GM12878 (cell line): ENCODE measurements at regions of chr12 and their contacts with region 1.

Region 1: GRCh38 chr12:100554608-100555077 is 18.8 kb upstream of the GAS2L3 start:
- DNase-seq: no peak
- ATAC-seq: peak; percentile 34; the same call in 2 of the 3 replicates
- H3K4me3 ChIP-seq: no peak overlapping the region
- H3K27ac ChIP-seq: no peak overlapping the region
- H3K4me1 ChIP-seq: no peaks in the 10 kb centered on the region
- H3K27me3 ChIP-seq: no peaks in the 10 kb centered on the region
- CTCF ChIP-seq: peak; percentile 44 to 59 (median 50); a peak in 5 of 6 replicates
- EP300 ChIP-seq: no peak
- POLR2A ChIP-seq: no peak
- RAD21 ChIP-seq: peak; percentile 63

Region 2: GRCh38 chr12:99810718-99811593 is 743.7 kb before region 1 on chr12:
- CTCF ChIA-PET with region 1: no interaction called
- POLR2A ChIA-PET with region 1: no interaction called
- RAD21 ChIA-PET with region 1: no interaction called
- SMC1A ChIA-PET with region 1: no interaction called
- in situ Hi-C with region 1: no loop called
- intact Hi-C with region 1: loop called (anchors 10 kb)
- DNase-seq: no peak
- ATAC-seq: peak; percentile 21; the same call in 1 of the 3 replicates
- H3K4me3 ChIP-seq: no peak overlapping the region
- H3K27ac ChIP-seq: no peak overlapping the region
- H3K4me1 ChIP-seq: no peaks in the 10 kb centered on the region
- H3K27me3 ChIP-seq: no peaks in the 10 kb centered on the region; a peak in 1 of 4 replicates
- CTCF ChIP-seq: peak; percentile 3 to 28 (median 14); a peak in 2 of 6 replicates
- EP300 ChIP-seq: no peak
- POLR2A ChIP-seq: no peak
- RAD21 ChIP-seq: peak; percentile 23

Region 3: GRCh38 chr12:100154474-100155247 is 400.0 kb before region 1 on chr12:
- CTCF ChIA-PET with region 1: interaction called, 5 read pairs
- POLR2A ChIA-PET with region 1: no interaction called
- RAD21 ChIA-PET with region 1: no interaction called
- SMC1A ChIA-PET with region 1: no interaction called
- in situ Hi-C with region 1: no loop called
- intact Hi-C with region 1: loop called (anchors 10 kb)
- DNase-seq: no peak
- ATAC-seq: peak; percentile 91
- H3K4me3 ChIP-seq: no peak overlapping the region
- H3K27ac ChIP-seq: no peak overlapping the region
- H3K4me1 ChIP-seq: 0 out of 2 replicates have a peak, but pooled peaks cover 3% of the 10 kb centered on the region
- H3K27me3 ChIP-seq: no peaks in the 10 kb centered on the region
- CTCF ChIP-seq: peak; percentile 63 to 94 (median 91)
- EP300 ChIP-seq: no peak
- POLR2A ChIP-seq: no peak
- RAD21 ChIP-seq: peak; percentile 56

Region 4: DNA sequence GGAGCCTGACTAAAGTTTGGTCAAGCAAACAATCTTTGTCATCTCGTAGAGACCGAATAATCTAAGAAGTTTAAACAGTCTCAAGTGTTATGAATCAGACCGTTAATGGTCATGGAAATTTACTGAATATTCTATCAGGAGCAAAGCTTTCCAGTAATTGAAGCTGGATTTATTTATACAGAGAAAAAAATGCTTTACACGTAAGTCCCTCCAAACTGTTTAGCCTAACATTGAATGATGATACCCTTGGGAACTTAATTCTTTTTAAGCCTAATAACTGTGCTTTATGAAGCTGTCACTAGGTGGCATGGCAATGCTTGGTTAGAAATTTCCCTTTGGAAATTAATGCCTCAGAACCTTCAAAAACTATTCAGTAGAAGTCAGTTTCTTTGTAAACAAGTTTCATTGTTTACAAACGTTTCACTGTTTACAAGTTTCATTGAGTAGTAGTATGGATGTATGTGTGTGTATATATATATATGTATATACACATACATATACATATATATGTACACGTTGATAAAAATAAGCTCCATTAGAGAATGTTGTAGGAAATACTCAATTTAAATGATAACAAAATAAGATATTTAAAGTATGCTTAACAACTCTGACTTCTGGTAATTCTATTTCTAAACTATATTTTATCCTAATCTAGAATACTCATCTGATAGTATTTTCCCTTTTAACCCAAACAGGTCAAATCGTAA is 319.9 kb before region 1 on chr12:
- CTCF ChIA-PET with region 1: interaction called, 33 read pairs
- POLR2A ChIA-PET with region 1: interaction called, 6 read pairs
- RAD21 ChIA-PET with region 1: interaction called, 15 read pairs
- SMC1A ChIA-PET with region 1: interaction called, 7 read pairs
- in situ Hi-C with region 1: loop called (anchors 5 kb)
- intact Hi-C with region 1: loop called (anchors 2 kb)
- DNase-seq: peak; percentile 1
- ATAC-seq: peak; percentile 70
- H3K4me3 ChIP-seq: no peak overlapping the region
- H3K27ac ChIP-seq: no peak overlapping the region
- H3K4me1 ChIP-seq: no peaks in the 10 kb centered on the region
- H3K27me3 ChIP-seq: no peaks in the 10 kb centered on the region
- CTCF ChIP-seq: peak; percentile 71 to 84 (median 75)
- EP300 ChIP-seq: no peak
- POLR2A ChIP-seq: no peak
- RAD21 ChIP-seq: peak; percentile 88

Region 5: GRCh38 chr12:100348657-100349454 is 205.8 kb before region 1 on chr12:
- CTCF ChIA-PET with region 1: interaction called, 13 read pairs
- POLR2A ChIA-PET with region 1: no interaction called
- RAD21 ChIA-PET with region 1: interaction called, 3 read pairs
- SMC1A ChIA-PET with region 1: interaction called, 4 read pairs
- in situ Hi-C with region 1: no loop called
- intact Hi-C with region 1: loop called (anchors 5 kb)
- DNase-seq: no peak
- ATAC-seq: peak; percentile 58; the same call in 2 of the 3 replicates
- H3K4me3 ChIP-seq: no peak overlapping the region
- H3K27ac ChIP-seq: no peak overlapping the region
- H3K4me1 ChIP-seq: no peaks in the 10 kb centered on the region
- H3K27me3 ChIP-seq: no peaks in the 10 kb centered on the region
- CTCF ChIP-seq: peak in 2 of 3 experiments; percentile 8 to 48; a peak in 2 of 6 replicates
- EP300 ChIP-seq: no peak
- POLR2A ChIP-seq: no peak
- RAD21 ChIP-seq: peak; percentile 59

Region 6: GRCh38 chr12:100566887-100567637 is 12.4 kb after region 1 on chr12:
- CTCF ChIA-PET with region 1: interaction called, 28 read pairs
- POLR2A ChIA-PET with region 1: interaction called, 3 read pairs
- RAD21 ChIA-PET with region 1: interaction called, 9 read pairs
- SMC1A ChIA-PET with region 1: interaction called, 7 read pairs
- in situ Hi-C with region 1: no loop called
- intact Hi-C with region 1: no loop called
- DNase-seq: peak; percentile 71
- ATAC-seq: peak; percentile 97
- H3K4me3 ChIP-seq: no peak overlapping the region
- H3K27ac ChIP-seq: no peak overlapping the region
- H3K4me1 ChIP-seq: peaks cover 7% of the 10 kb centered on the region
- H3K27me3 ChIP-seq: no peaks in the 10 kb centered on the region
- CTCF ChIP-seq: no peak
- EP300 ChIP-seq: peak in 1 of 2 experiments; percentile 9; a peak in 1 of 4 replicates
- POLR2A ChIP-seq: no peak
- RAD21 ChIP-seq: no peak

Region 7: DNA sequence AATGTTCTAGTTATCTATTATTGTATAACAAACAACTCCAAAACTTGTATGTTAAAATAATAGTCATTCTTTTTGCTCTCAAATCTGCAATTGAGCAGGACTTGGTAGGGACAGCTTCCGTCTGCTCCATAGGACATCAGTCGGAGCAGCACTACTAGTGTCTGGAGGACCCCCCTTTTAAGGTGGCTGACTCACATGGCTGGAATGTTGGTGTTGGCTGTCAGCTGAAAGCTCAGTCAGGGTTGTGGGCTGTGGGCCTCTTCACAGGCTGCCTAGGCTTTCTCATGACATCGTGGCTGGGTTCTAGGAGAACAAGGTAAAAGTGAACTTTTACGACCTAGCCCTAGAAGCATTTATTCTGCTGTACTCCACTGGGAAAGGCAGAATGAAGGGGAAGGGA is 400.5 kb after region 1 on chr12:
- CTCF ChIA-PET with region 1: no interaction called
- POLR2A ChIA-PET with region 1: no interaction called
- RAD21 ChIA-PET with region 1: no interaction called
- SMC1A ChIA-PET with region 1: no interaction called
- in situ Hi-C with region 1: no loop called
- intact Hi-C with region 1: no loop called
- DNase-seq: no peak
- ATAC-seq: no peak
- H3K4me3 ChIP-seq: no peak overlapping the region
- H3K27ac ChIP-seq: no peak overlapping the region
- H3K4me1 ChIP-seq: no peaks in the 10 kb centered on the region
- H3K27me3 ChIP-seq: no peaks in the 10 kb centered on the region; a peak in 2 of 4 replicates
- CTCF ChIP-seq: no peak
- EP300 ChIP-seq: no peak
- POLR2A ChIP-seq: no peak
- RAD21 ChIP-seq: no peak